Caki2 (cell line): ENCODE measurements at regions of chr2 and their contacts with region 1.

Region 1: GRCh38 chr2:55010149-55010591 is 40.1 kb downstream of the RTN4 start:
- DNase-seq: peak; percentile 68

Region 2: DNA sequence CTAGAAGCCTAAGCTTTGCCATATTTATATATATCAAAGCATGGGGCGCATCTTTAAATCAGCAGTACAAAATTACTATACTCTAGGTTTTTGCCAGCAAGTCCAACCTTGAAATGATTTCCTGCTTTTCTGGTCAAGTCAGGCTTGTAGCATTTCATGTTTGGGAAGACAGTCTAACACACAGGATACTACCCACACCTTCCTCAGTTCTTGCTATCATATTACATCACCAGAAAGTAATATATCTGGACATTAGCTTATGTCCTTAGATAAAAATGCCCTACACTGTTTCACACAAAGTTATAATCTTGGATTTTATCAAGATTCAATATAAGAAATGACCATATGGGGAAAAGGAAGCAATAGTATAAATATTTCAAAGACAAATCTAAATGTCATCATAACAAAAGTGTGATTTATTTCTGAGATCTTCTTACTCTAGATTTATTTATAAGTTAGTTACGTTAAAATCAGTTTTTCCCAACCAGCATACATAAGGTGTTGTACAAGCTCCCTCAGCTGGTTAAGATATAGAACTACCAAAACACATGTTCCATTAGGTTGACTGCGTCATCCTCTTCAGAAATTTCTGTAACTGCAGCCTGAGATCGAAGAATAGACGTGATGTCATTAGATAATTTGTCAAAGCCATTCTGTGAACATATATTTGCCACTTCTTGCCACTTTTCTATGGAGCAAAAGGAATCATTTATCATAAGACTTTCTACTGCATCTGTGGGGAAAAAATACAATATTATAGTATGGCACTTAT is 165.3 kb after region 1 on chr2:
- in situ Hi-C with region 1: loop called (anchors 10 kb)
- DNase-seq: peak; percentile 29